ENCODE measurements at regions of chr2 and their contacts with region 1.

Region 1: DNA sequence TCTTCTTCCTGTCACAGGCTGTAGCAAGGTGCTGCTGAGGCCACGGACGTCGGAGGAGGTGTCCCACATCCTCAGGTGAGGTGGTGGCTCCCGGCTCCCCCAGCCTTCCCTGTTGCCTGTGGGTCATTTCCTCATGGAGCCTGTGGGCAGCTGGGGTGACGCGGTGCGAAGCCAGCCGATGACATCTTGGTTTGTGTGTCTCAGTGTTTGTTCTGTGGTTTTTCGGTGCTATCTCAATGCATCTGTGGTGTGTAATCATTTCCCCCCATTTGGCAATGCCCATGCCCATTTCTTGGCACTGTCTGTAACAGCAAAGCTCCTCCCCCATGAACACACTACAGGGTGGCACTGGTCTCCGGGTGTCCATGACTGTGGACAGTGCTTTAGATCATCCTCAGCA is 6.6 kb downstream of the D2HGDH start:
- DNase-seq: no peak
- ATAC-seq: no peak

Region 2: DNA sequence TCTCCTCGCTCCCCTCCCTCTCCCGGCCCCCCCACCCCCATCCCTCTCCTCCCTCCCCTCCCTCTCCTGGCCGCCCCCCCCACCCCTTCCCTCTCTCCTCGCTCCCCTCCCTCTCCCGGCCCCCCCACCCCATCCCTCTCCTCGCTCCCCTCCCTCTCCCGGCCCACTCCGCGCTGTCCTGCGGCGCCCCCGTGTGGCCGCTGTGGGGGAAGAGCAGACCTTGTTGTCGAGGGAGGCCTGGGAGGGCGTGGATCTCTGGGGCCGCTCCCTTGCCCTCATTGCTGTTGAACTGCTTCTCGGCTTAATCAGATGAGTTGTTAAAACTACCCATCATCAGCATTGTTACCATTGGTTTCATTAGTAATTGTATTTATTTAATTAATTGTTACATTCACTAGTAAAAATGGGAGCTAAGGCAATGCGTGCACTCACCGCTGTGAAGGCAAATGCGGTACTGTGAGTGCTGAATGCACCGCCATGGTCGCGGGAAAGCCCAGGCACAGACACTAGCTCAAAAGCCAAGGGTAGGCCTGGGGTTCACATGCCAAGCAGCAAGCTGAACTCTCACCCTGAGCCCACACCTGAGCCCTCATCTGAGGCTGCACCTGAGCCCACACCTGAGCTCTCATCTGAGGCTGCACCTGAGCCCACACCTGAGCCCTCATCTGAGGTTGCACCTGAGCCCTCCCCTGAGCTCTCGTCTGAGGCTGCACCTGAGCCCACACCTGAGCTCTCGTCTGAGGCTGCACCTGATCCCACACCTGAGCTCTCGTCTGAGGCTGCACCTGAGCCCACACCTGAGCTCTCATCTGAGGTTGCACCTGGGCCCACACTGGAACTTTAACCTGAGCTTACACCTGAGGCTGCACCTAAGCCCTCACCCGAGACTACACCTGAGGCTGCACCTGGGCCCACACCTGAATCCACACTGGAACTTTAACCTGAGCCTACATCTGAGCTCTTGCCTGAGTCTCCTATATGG is 137.3 kb after region 1 on chr2:
- intact Hi-C with region 1: loop called (anchors 10 kb)
- DNase-seq: peak; percentile 85
- ATAC-seq: no peak

Region 3: GRCh38 chr2:241908686-241909420 is 167.8 kb after region 1 on chr2:
- intact Hi-C with region 1: no loop called
- DNase-seq: no peak
- ATAC-seq: no peak

Measured in sciatic nerve (tissue), 2 donors.